Heart right ventricle (tissue), 16 donors: ENCODE measurements at regions of chr19 and their contacts with region 1.

Region 1: DNA sequence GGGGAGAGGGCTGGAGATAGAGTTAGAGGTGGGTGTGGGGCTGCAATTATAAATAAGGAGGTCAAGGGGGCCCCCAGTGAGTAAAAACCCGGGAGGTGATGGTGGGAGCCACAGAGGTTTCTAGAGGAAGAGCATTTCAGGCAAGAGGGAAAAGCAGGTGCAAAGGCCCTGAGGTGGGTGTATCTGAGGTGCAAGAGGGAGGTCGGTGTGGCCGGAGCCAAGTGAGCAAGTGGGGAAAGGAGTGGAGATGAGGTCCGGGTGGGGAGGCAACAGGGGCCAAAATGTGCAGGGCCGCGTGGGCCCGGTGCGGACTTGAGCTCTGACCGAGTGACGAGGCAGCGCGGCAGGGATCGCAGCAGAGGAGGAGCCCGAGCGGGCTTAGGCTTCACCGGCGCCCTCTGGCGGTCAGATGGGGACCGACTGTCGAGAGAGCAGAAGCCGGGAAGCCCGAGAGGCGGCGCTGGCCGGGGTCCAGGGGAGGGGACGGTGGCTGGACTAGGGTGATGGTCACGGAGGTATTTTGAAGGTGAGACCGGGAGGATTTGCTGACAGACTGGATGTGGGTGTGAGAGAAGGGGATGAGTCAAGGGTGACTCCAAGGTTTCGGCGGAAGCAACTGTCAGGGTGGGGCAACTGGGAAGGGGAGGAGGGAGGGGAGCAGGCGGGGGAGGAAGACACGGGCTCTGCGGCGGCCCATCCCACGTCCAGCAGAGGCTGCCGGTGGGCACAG is 17.7 kb upstream of the SPACA4 start:
- DNase-seq: peak; percentile 89 to 94
- ATAC-seq: peak; percentile 77 to 90 (median 88)
- H3K4me3 ChIP-seq: peak overlapping the region in 9 of 10 donors; percentile 21 to 52 (median 47)
- H3K27ac ChIP-seq: peak overlapping the region in 2 of 10 donors; percentile 0 to 74
- H3K4me1 ChIP-seq: peaks cover 0 to 15% (median 8%) of the 10 kb centered on the region in 9 donors
- H3K27me3 ChIP-seq: no peaks in the 10 kb centered on the region
- CTCF ChIP-seq: peak; percentile 80 to 98 (median 94)

Region 2: GRCh38 chr19:48271531-48272151 is 317.2 kb before region 1 on chr19:
- intact Hi-C with region 1: loop called in 5 of 10 experiments (anchors 2 to 10 kb)
- DNase-seq: peak; percentile 40 to 45
- ATAC-seq: peak; percentile 59 to 80 (median 75)
- H3K4me3 ChIP-seq: peak overlapping the region; percentile 34 to 71 (median 58)
- H3K27ac ChIP-seq: peak overlapping the region in 9 of 10 donors; percentile 24 to 85 (median 73)
- H3K4me1 ChIP-seq: peaks cover 0 to 21% (median 8%) of the 10 kb centered on the region in 9 donors
- H3K27me3 ChIP-seq: peaks cover 0 to 3% (median 0%) of the 10 kb centered on the region in 7 donors
- CTCF ChIP-seq: no peak

Region 3: GRCh38 chr19:48321622-48322591 is 266.9 kb before region 1 on chr19:
- intact Hi-C with region 1: loop called in 6 of 10 experiments (anchors 2 to 10 kb)
- DNase-seq: peak; percentile 98 to 100
- ATAC-seq: peak; percentile 90 to 94 (median 92)
- H3K4me3 ChIP-seq: peak overlapping the region; percentile 40 to 68 (median 60)
- H3K27ac ChIP-seq: peak overlapping the region; percentile 90 to 100 (median 98)
- H3K4me1 ChIP-seq: peaks cover 4 to 65% (median 48%) of the 10 kb centered on the region in 9 donors
- H3K27me3 ChIP-seq: no peaks in the 10 kb centered on the region
- CTCF ChIP-seq: peak in 4 of 9 donors; percentile 14 to 33 (median 25)

Region 4: DNA sequence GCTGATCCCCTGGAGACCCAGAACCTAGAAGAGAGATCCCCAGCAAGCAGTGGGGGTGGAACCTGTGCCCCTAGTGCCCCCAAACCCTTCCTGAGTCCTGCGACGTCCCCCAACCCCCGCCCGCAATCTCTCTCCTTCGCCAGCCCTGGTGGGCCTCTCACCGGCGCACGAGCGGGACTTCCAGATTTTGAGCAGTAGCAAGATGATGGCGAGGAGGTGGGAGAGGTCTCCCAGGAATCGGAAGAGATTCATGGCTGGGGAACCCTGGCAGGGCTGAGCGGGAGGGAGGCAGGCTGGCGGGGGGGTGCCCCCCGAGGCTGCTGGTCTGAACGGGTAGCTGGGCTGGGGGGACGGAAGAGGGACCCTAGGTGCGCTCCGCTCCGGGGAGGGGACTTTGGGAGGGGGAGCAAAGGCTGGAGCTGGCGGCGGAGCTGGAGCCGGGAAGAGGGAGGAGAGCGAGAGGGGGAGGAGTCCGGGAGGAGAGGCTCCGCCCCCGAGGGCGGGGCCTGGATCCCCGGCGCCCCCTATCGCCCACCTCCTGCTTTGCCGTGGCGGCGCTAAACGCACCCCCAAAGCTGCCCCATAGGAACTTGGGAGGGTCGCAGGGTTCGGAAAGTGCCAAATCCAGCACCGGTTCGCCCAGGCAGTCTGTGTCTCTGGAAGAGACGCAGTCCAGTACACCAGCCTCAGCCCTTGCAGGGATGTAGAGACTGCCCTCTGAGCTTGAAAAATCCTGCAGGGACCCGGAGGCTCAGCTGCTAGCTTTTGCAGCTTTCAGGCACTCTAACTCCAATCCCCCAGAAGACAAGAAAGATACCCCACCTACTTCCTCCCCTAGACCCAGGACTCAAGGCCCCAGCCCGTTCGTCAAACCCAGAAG is 197.5 kb before region 1 on chr19 and contains the start of gene KDELR1:
- intact Hi-C with region 1: no loop called
- DNase-seq: peak; percentile 78 to 81
- ATAC-seq: peak; percentile 92 to 97 (median 94)
- H3K4me3 ChIP-seq: peak within 1 kb of the TSS; percentile 71 to 100 (median 95)
- H3K27ac ChIP-seq: peak within 1 kb of the TSS; percentile 62 to 97 (median 90)
- H3K4me1 ChIP-seq: peaks cover 0 to 21% (median 14%) of the 10 kb centered on the region in 9 donors
- H3K27me3 ChIP-seq: peaks cover 11 to 41% (median 40%) of the 10 kb centered on the region in 7 donors
- CTCF ChIP-seq: peak; percentile 82 to 96 (median 92)
- total RNA-seq, gene KDELR1: 63.2 to 95.2 (median 73.2) TPM

Region 5: DNA sequence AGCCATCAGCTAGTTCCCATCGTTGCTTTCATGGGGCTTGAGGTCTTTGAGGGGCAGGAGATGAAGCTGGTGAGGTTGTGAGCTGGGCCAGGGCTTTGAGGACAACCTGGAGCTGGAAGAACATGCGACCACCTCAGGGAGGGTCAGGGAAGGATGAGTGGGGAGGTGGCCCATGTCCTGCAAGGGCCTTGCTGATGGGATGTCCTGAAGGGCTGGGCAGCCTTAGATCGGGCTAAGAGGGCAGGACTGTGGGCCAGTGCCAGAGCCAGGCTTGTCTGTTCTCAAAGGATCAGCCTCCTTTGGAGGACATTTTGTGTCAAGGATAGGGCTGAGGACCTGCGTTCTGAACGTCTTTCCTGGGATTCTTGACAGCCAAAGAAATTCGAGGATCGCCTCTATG is 109.1 kb before region 1 on chr19:
- intact Hi-C with region 1: no loop called
- DNase-seq: no peak
- ATAC-seq: peak in 4 of 8 donors; percentile 3 to 35 (median 13)
- H3K4me3 ChIP-seq: peak overlapping the region in 4 of 10 donors; percentile 51 to 81 (median 58)
- H3K27ac ChIP-seq: peak overlapping the region in 9 of 10 donors; percentile 84 to 98 (median 94)
- H3K4me1 ChIP-seq: peaks cover 15 to 27% (median 20%) of the 10 kb centered on the region in 9 donors
- H3K27me3 ChIP-seq: no peaks in the 10 kb centered on the region
- CTCF ChIP-seq: no peak

Region 6: GRCh38 chr19:48506138-48506733 is 82.6 kb before region 1 on chr19:
- intact Hi-C with region 1: loop called in 8 of 10 experiments (anchors 1 to 5 kb)
- DNase-seq: no peak
- ATAC-seq: no peak
- H3K4me3 ChIP-seq: no peak overlapping the region
- H3K27ac ChIP-seq: no peak overlapping the region
- H3K4me1 ChIP-seq: peaks cover 0 to 13% (median 8%) of the 10 kb centered on the region in 9 donors
- H3K27me3 ChIP-seq: peaks cover 3 to 34% (median 22%) of the 10 kb centered on the region in 7 donors
- CTCF ChIP-seq: peak; percentile 9 to 52 (median 41)